Transverse colon (tissue), 4 donors: ENCODE measurements at regions of chr19 and their contacts with region 1.

Region 1: GRCh38 chr19:15101479-15102082 is 5.6 kb upstream of the SYDE1 start:
- DNase-seq: peak; percentile 52
- H3K4me3 ChIP-seq: no peak overlapping the region
- H3K27ac ChIP-seq: no peak overlapping the region
- H3K4me1 ChIP-seq: peaks cover 0 to 2% (median 0%) of the 10 kb centered on the region in 4 donors
- H3K27me3 ChIP-seq: peaks cover 4% of the 10 kb centered on the region
- CTCF ChIP-seq: peak; percentile 61 to 73 (median 66)
- EP300 ChIP-seq: no peak
- POLR2A ChIP-seq: no peak

Region 2: DNA sequence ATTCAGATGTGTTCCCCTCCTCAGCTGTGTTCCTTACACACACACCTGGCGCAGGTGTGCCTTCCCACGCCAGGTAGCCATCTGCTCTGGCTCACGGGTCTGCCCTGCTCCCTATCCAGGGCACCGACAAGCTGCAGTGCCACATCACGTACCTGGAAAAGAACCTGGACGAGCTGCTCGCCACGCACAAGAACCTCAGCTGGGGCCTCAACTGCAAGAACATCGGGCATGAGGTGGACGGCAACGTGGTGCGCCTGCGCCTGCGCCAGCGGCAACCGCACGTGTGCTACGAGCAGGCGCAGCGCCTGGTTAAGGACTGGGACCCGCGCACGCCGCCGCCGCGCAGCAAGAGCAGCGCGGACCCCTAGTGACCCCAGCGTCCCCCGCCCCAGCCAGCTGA is 78.8 kb before region 1 on chr19:
- in situ Hi-C with region 1: no loop called
- intact Hi-C with region 1: no loop called
- DNase-seq: no peak
- H3K4me3 ChIP-seq: no peak overlapping the region
- H3K27ac ChIP-seq: no peak overlapping the region
- H3K4me1 ChIP-seq: no peaks in the 10 kb centered on the region
- H3K27me3 ChIP-seq: peaks cover 12% of the 10 kb centered on the region
- CTCF ChIP-seq: no peak
- EP300 ChIP-seq: no peak
- POLR2A ChIP-seq: no peak

Region 3: GRCh38 chr19:15154002-15154612 is 52.5 kb after region 1 on chr19:
- in situ Hi-C with region 1: loop called (anchors 5 to 10 kb)
- intact Hi-C with region 1: no loop called
- DNase-seq: peak; percentile 38
- H3K4me3 ChIP-seq: no peak overlapping the region
- H3K27ac ChIP-seq: no peak overlapping the region
- H3K4me1 ChIP-seq: no peaks in the 10 kb centered on the region
- H3K27me3 ChIP-seq: no peaks in the 10 kb centered on the region
- CTCF ChIP-seq: peak in 4 of 5 experiments; percentile 23 to 41 (median 35)
- EP300 ChIP-seq: no peak
- POLR2A ChIP-seq: no peak